Activated T-helper 1 cell treated with anti-CD3 and anti-CD28 coated beads, Interleukin-12 subunit alpha, Interleukin-12 subunit beta, Interleukin-2, Interleukin-4 antibody, amounts not matched to agents 30 ng/mL and 10 ng/mL and 1 ng/mL, durations not matched to agents 14 hours and 24 hours and 36 hours (primary cell): ENCODE measurements at regions of chr15 and their contacts with region 1.

Region 1: DNA sequence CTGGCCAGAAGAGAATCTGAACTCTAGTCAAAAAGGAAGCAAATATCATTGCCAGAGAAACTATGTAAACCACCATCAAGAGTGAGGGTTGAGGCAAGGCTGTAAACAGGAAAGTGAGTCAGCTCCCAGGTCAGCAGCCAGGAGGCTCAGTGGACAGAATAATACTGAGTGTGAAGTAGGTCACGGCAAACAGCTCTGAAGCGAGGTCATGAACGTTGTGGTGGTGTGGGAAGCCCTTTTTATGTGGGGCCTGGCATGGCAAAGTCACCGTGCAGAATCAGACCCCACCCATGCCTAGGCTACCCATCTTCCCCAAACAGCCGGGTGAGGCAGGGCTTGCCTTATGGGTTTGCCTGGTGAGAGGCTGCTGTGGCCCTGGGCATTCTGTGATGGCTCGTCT is 43.9 kb downstream of the THBS1 start:
- DNase-seq: peak; percentile 65
- H3K4me3 Mint-ChIP-seq: peak overlapping the region; percentile 71
- H3K27ac Mint-ChIP-seq: peak overlapping the region; percentile 98
- H3K4me1 Mint-ChIP-seq: peaks cover 81% of the 10 kb centered on the region
- H3K27me3 Mint-ChIP-seq: no peaks in the 10 kb centered on the region

Region 2: GRCh38 chr15:38554354-38554753 is 1070.5 kb before region 1 on chr15:
- intact Hi-C with region 1: loop called (anchors 5 kb)
- DNase-seq: no peak
- H3K4me3 Mint-ChIP-seq: peak overlapping the region; percentile 96
- H3K27ac Mint-ChIP-seq: peak overlapping the region; percentile 93
- H3K4me1 Mint-ChIP-seq: peaks cover 87% of the 10 kb centered on the region
- H3K27me3 Mint-ChIP-seq: no peaks in the 10 kb centered on the region

Region 3: GRCh38 chr15:39140060-39140604 is 484.7 kb before region 1 on chr15:
- intact Hi-C with region 1: loop called (anchors 5 kb)
- DNase-seq: peak; percentile 14
- H3K4me3 Mint-ChIP-seq: no peak overlapping the region
- H3K27ac Mint-ChIP-seq: peak overlapping the region; percentile 37
- H3K4me1 Mint-ChIP-seq: peaks cover 54% of the 10 kb centered on the region
- H3K27me3 Mint-ChIP-seq: no peaks in the 10 kb centered on the region

Region 4: DNA sequence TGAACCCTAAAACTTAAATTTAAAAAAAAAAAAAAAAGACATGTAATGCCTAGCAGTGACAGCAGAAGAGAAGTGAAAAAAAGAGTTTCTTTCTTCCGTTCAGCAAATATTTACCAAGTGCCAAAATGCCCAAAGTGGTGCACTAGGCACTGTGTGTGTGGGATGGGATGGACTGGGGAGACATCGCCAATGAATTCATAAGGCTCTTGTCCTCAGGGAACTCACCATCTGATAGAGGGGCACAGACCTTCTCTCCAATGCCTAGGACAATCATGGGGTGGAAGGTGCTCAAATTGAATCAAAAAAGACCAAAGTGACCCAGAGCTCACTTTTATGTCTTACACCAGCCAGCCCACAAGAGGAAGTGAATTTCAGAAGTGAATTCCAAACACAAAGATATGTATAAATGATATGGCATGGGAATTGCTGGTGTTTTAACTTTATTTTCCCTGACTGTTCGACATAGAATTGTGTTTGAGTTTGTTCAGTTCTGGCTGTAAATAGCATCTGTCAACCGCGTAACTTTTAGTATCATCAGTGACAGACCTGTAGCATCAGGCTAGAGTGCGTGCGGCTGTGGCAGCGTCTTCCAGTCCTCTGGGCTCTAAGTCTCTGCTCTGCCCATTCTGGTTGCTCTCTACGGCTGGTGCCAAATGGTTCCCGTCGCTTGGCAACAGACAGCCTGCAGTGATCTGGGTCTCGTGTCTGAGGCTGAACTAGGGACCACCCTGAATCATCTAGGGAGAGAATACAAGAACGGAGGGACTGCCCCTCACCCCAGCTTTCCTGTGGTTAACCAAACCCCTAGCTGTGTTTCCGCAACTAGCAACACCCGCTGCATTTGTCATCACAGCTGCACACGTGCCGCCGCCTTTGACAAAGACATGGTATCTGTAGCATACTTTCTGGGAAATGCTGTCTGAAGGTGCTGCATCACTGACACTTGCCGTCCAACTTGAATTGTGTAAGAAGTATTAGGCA is 198.0 kb before region 1 on chr15:
- intact Hi-C with region 1: loop called (anchors 1 kb)
- DNase-seq: peak; percentile 63
- H3K4me3 Mint-ChIP-seq: peak overlapping the region; percentile 19
- H3K27ac Mint-ChIP-seq: peak overlapping the region; percentile 55
- H3K4me1 Mint-ChIP-seq: peaks cover 19% of the 10 kb centered on the region
- H3K27me3 Mint-ChIP-seq: peaks cover 24% of the 10 kb centered on the region

Region 5: DNA sequence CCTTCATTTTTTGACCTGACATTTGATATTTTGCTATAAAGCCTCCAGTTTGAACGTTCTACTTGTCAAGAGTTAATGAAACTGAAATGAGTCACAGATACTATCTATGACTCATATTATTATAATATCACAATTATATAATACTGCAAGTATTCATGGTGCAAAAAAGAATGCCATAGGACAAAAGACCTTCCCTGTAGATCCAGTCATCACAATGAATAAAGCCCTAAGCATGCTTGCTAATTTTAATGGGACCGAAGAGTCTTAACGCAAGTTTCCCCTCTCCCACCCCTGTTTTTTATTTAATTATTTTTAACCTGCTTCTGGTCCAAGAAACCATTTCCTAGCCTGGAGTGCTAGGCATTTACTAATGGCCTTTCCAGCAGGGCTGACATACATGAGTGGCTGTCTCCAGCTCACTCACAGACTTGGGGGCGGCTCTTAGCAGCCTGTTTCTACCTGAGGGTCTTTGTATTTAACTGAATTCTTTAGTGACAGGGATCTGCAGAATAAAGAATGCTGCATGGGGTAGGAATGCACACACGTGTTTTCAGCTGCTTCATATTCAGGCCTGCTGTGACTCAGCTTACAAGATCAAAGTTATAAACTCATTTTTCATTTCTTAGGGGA is 17.3 kb after region 1 on chr15:
- intact Hi-C with region 1: loop called (anchors 2 kb)
- DNase-seq: no peak
- H3K4me3 Mint-ChIP-seq: no peak overlapping the region
- H3K27ac Mint-ChIP-seq: no peak overlapping the region
- H3K4me1 Mint-ChIP-seq: peaks cover 33% of the 10 kb centered on the region
- H3K27me3 Mint-ChIP-seq: peaks cover 10% of the 10 kb centered on the region